ENCODE measurements at regions of chr6 and their contacts with region 1.

Region 1: DNA sequence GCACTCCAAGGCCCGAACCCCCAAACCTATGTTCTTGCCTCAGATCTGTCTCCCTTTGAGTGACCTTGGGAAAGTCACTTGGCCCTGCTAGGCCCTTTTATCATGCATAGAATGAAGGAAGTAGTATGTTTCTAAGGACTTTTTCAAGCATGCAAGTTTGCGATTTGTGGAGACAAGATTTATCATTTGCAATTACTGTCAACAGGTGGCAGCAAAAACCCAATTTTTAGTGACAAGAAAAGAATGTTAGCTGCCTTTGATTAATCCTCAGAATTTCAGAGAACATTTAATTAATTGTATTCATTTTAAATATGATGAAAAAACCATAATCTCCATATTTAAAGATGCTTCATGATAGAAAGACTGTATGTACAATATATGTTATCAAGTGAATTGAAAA is 28.3 kb upstream of the PREP start:
- DNase-seq: no peak
- ATAC-seq: no peak
- H3K4me3 ChIP-seq: no peak overlapping the region
- H3K27ac ChIP-seq: no peak overlapping the region
- H3K4me1 ChIP-seq: peaks cover 0 to 9% (median 0%) of the 10 kb centered on the region in 12 donors
- H3K27me3 ChIP-seq: peaks cover 0 to 6% (median 0%) of the 10 kb centered on the region in 9 donors
- CTCF ChIP-seq: peak; percentile 37 to 71 (median 56)
- POLR2A ChIP-seq: no peak

Region 2: GRCh38 chr6:105087571-105088211 is 343.5 kb before region 1 on chr6:
- intact Hi-C with region 1: loop called in 1 of 10 experiments (anchors 5 kb)
- DNase-seq: no peak
- ATAC-seq: peak in 2 of 4 donors; percentile 57 to 59
- H3K4me3 ChIP-seq: no peak overlapping the region
- H3K27ac ChIP-seq: no peak overlapping the region
- H3K4me1 ChIP-seq: no peaks in the 10 kb centered on the region
- H3K27me3 ChIP-seq: no peaks in the 10 kb centered on the region
- CTCF ChIP-seq: peak; percentile 68 to 91 (median 81)
- POLR2A ChIP-seq: no peak

Region 3: DNA sequence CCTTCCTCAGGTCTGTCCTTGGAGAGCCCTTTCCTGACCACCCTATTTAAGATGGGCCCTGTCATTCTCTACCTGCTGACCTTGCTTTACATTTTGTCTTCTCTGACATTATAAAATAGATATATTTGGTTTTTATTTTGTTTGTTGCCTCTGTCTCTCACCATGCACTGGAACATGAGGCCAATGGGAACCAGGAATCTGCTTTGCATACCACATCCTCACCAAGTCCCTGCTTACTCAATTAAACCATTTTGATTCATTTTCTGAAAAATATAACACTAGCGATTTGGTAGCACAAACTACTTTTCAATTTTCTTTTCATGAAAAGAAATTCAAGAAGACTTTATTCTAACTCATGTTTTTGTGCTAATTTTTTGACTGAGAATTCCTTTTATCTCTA is 218.6 kb before region 1 on chr6:
- intact Hi-C with region 1: no loop called
- DNase-seq: no peak
- ATAC-seq: no peak
- H3K4me3 ChIP-seq: no peak overlapping the region
- H3K27ac ChIP-seq: no peak overlapping the region
- H3K4me1 ChIP-seq: peaks cover 0 to 7% (median 0%) of the 10 kb centered on the region in 12 donors
- H3K27me3 ChIP-seq: no peaks in the 10 kb centered on the region
- CTCF ChIP-seq: no peak
- POLR2A ChIP-seq: no peak

Region 4: DNA sequence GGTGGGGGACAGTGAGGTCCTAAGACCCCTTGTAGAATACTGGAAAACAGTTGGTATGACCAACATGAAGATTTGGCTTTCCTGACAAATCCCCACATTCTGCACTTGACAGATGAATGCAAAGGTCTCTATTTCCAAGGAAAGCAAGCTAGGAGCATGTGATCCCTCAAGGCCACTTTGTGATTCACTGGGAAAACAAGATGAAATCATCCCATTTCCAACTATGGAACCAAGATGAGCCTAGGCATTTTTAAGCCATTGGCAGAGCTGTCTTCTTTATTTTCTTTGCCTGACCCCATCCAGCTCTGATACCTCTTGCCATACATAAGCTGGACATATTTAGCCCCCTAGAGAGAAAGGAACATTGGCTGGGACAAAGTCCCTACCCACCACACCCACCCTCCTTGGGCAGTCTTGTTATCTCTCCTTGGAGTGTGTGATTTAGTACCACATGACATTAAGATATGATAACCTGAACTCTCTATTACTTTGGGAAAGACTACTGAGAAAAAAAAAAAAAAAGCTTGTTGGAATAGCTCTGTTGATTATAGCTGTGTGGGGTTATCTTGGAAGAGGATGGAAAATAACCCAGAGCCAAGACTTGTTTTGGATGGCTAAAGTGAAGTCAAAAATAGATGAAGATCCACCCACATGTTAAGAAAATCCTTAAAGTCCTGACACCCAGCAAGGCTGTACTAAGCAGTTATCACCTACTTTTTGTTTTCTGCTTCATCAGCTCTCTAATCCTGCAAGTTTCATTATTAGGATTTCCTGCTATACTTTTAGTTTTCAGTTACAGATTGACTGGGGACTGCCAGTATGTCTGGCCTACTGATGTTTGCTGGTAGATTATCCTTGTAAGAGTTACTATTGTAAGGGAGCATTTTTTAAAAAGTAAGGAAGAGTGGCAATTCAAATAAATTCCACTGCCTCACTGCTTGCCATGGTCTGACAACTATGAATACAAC is 61.8 kb after region 1 on chr6:
- intact Hi-C with region 1: no loop called
- DNase-seq: no peak
- ATAC-seq: peak in 3 of 4 donors; percentile 33 to 49 (median 45)
- H3K4me3 ChIP-seq: no peak overlapping the region
- H3K27ac ChIP-seq: peak overlapping the region in 10 of 12 donors; percentile 4 to 72 (median 48)
- H3K4me1 ChIP-seq: peaks cover 0 to 52% (median 35%) of the 10 kb centered on the region in 12 donors
- H3K27me3 ChIP-seq: no peaks in the 10 kb centered on the region
- CTCF ChIP-seq: no peak
- POLR2A ChIP-seq: no peak

Region 5: GRCh38 chr6:106300944-106301343 is 869.7 kb after region 1 on chr6:
- intact Hi-C with region 1: loop called in 8 of 10 experiments (anchors 5 to 10 kb)
- DNase-seq: no peak
- ATAC-seq: no peak
- H3K4me3 ChIP-seq: no peak overlapping the region
- H3K27ac ChIP-seq: no peak overlapping the region
- H3K4me1 ChIP-seq: peaks cover 0 to 5% (median 0%) of the 10 kb centered on the region in 12 donors
- H3K27me3 ChIP-seq: no peaks in the 10 kb centered on the region
- CTCF ChIP-seq: peak in 11 of 12 donors; percentile 24 to 67 (median 51)
- POLR2A ChIP-seq: no peak